Natural killer cell (primary cell): ENCODE measurements at regions of chr17 and their contacts with region 1.

Region 1: GRCh38 chr17:48878918-48879898 is 13.4 kb upstream of the ATP5MC1 start:
- DNase-seq: peak; percentile 28 to 88
- ATAC-seq: peak; percentile 90 to 99 (median 97)
- H3K4me3 ChIP-seq: no peak overlapping the region
- H3K4me3 Mint-ChIP-seq: no peak overlapping the region
- H3K27ac ChIP-seq: no peak overlapping the region
- H3K27ac Mint-ChIP-seq: no peak overlapping the region
- H3K4me1 ChIP-seq: peaks cover 9% of the 10 kb centered on the region
- H3K4me1 Mint-ChIP-seq: no peaks in the 10 kb centered on the region
- H3K27me3 ChIP-seq: no peaks in the 10 kb centered on the region
- H3K27me3 Mint-ChIP-seq: peaks cover 0 to 9% of the 10 kb centered on the region in 2 donors
- CTCF ChIP-seq: peak; percentile 95

Region 2: GRCh38 chr17:48678141-48678971 is 200.9 kb before region 1 on chr17:
- intact Hi-C with region 1: loop called (anchors 1 kb)
- DNase-seq: peak; percentile 75 to 80
- ATAC-seq: peak; percentile 85 to 99 (median 98)
- H3K4me3 ChIP-seq: no peak overlapping the region
- H3K4me3 Mint-ChIP-seq: no peak overlapping the region
- H3K27ac ChIP-seq: no peak overlapping the region
- H3K27ac Mint-ChIP-seq: no peak overlapping the region
- H3K4me1 ChIP-seq: peaks cover 9% of the 10 kb centered on the region
- H3K4me1 Mint-ChIP-seq: peaks cover 0 to 4% of the 10 kb centered on the region in 2 donors
- H3K27me3 ChIP-seq: peaks cover 4% of the 10 kb centered on the region
- H3K27me3 Mint-ChIP-seq: peaks cover 32 to 41% of the 10 kb centered on the region in 2 donors
- CTCF ChIP-seq: peak; percentile 94

Region 3: DNA sequence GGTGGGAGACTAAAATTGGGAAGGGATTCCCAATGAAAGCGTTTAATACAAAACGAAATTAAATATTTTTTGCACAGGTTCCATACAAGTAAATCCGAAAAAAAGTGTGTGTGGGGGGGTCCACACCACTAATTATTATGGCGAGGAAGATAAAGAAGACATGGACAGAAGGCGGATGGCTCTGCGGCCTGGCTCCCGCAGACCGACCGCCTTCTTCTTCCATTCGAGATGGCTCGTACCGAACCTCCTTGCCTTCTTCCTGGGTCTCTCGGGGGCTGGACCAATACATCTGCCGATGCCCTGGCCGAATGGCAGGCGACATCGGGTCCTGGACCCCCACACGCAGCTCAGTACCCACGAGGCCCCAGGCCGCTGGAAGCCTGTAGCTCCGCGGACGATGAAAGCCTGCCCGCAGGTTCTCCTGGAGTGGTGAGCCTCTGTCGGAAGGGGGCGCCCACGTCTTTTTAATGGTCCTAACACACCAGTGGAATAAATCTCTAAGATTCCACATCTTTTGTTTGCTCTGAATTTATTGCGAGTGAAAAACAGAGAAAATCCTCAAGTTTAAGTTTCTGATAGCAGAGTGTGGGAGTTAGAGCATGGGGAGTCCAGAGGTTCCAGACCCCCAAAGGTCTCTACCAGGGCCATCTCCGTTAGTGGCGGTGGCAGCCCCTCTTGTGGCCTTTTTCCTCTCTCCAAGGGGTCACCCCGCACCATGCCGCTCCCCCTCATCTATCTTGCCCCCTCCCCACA is 154.8 kb before region 1 on chr17:
- intact Hi-C with region 1: loop called (anchors 1 kb)
- DNase-seq: peak; percentile 71 to 83
- ATAC-seq: peak; percentile 66 to 79 (median 69)
- H3K4me3 ChIP-seq: no peak overlapping the region
- H3K4me3 Mint-ChIP-seq: peak overlapping the region; percentile 83
- H3K27ac ChIP-seq: no peak overlapping the region
- H3K27ac Mint-ChIP-seq: peak overlapping the region; percentile 35 to 70
- H3K4me1 ChIP-seq: peaks cover 52% of the 10 kb centered on the region
- H3K4me1 Mint-ChIP-seq: peaks cover 27 to 56% of the 10 kb centered on the region in 2 donors
- H3K27me3 ChIP-seq: peaks cover 96% of the 10 kb centered on the region
- H3K27me3 Mint-ChIP-seq: peaks cover 85 to 87% of the 10 kb centered on the region in 2 donors
- CTCF ChIP-seq: peak; percentile 74

Region 4: DNA sequence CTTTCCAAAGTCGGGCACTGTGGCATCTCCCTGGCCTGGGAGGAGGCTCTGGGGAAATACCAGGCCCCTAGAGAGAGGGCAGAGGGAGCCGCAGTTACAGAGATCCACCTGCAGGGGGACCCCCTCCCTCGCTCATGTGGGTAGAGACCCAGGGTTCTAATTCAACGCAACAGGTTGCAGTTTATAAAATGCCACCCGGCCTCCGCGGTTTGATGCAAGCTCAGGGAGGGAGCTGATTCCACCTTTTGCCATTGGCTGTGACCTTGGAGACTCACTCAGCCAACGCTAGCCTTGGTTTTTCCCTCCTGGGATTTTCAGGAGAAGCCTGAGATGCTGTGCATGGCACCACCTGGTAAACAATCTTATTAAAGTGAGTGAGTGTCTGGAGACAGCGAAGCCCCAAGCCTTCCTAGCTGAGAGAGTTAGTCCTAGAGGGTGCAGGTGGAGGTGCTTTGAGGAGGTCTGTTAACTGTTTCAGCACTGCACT is 74.2 kb before region 1 on chr17:
- intact Hi-C with region 1: loop called (anchors 1 kb)
- DNase-seq: peak; percentile 54 to 80
- ATAC-seq: peak; percentile 79 to 97 (median 92)
- H3K4me3 ChIP-seq: no peak overlapping the region
- H3K4me3 Mint-ChIP-seq: no peak overlapping the region
- H3K27ac ChIP-seq: no peak overlapping the region
- H3K27ac Mint-ChIP-seq: no peak overlapping the region
- H3K4me1 ChIP-seq: no peaks in the 10 kb centered on the region
- H3K4me1 Mint-ChIP-seq: peaks cover 0 to 6% of the 10 kb centered on the region in 2 donors
- H3K27me3 ChIP-seq: peaks cover 2% of the 10 kb centered on the region
- H3K27me3 Mint-ChIP-seq: peaks cover 11 to 26% of the 10 kb centered on the region in 2 donors
- CTCF ChIP-seq: peak; percentile 96

Region 5: DNA sequence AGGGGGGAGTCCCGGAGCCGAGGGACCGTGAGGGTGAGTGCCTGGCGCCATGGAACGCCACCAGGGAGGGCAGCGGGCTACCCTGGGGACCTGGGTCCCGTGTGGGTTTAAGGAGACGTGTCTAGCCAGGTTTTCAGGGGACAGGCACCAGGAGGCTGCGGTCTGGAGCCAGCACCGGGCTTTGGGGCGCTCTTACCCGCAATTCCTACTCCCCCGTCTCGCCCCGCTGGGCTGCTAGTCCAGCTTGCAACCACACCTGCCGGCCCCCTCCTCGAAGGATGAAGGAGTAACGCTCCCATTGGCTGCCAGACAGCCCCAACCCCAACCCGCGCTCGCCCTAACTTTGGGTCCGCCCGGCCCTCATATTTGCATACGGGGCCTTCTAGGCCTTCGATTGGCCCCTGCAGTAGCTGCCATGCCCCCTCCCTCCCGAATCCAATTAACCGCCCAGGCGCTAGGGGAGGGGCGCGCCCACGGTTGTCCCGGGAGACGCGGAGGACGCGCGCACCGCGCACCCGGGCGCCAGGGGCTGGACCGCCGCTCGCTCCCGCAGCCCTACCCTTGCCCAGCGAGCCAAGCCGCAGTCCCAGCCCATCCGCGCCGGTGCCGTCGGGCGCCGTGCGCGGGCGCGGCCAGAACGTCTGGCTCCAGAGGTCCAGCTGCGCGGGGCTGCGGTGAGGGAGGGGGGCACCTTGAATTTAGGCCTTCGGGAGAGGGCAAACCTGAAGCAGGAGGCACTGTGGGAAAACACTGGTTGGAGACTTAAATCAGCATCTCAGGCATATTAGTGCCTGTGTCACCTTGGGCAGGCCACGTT is 62.2 kb before region 1 on chr17 and contains the start of gene TTLL6:
- intact Hi-C with region 1: loop called (anchors 1 kb)
- DNase-seq: peak; percentile 66 to 88
- ATAC-seq: peak; percentile 96 to 97 (median 97)
- H3K4me3 ChIP-seq: peak within 1 kb of the TSS; percentile 3
- H3K4me3 Mint-ChIP-seq: peak within 1 kb of the TSS; percentile 61
- H3K27ac ChIP-seq: no peak within 1 kb of the TSS
- H3K27ac Mint-ChIP-seq: peak within 1 kb of the TSS in 1 of 2 donors; percentile 53
- H3K4me1 ChIP-seq: peaks cover 16% of the 10 kb centered on the region
- H3K4me1 Mint-ChIP-seq: peaks cover 10% of the 10 kb centered on the region in 2 donors
- H3K27me3 ChIP-seq: peaks cover 8% of the 10 kb centered on the region
- H3K27me3 Mint-ChIP-seq: peaks cover 20 to 25% of the 10 kb centered on the region in 2 donors
- CTCF ChIP-seq: no peak
- total RNA-seq, gene TTLL6: not detected

Region 6: DNA sequence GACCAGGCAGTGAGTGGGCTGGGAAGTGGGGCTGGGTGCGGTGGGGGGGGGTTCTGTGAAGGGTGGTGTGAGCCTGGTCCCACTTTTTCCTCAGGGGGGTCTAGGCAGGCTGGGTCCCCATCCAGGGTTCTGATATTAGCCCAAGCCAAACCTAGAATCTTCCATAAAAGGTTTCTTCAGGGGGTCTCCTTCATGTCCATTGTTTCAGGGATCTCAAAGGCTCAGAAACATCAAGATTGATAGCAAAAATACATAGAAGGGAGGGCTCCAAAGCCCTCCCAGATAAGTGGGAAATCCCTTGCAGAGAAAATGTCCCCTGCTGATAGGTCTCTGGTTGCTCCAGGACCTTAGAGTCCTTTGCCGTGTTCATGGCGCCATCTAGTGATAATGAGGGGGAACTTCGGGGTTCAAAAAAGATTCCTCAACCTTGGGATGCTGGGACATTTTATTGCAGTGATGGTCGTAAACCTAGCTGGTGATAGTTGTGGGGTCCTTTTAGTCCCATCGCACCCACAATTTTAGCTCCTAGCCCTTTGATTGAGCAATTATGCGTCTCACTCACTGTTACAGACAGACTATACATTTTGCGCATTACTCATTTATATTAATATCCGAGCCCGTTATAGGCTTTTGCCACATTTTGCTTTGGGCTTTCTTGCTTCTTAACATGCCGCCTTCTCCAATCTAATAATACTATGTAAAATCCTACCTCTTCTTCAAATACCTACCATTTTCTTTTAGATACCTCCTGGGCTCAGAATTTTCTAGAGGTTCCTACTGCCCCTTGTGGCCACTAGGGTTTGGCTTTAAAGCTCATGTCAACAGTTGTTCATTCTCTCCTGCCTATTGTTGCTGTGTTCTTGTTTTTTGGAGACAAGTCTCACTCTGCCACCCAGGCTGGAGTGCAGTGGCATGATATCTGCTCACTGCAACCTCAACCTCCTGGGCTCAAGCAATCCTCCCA is 153.0 kb after region 1 on chr17:
- intact Hi-C with region 1: loop called (anchors 2 kb)
- DNase-seq: peak in 1 of 2 donors; percentile 73
- ATAC-seq: peak; percentile 70 to 91 (median 89)
- H3K4me3 ChIP-seq: no peak overlapping the region
- H3K4me3 Mint-ChIP-seq: no peak overlapping the region
- H3K27ac ChIP-seq: no peak overlapping the region
- H3K27ac Mint-ChIP-seq: no peak overlapping the region
- H3K4me1 ChIP-seq: no peaks in the 10 kb centered on the region
- H3K4me1 Mint-ChIP-seq: peaks cover 7 to 8% of the 10 kb centered on the region in 2 donors
- H3K27me3 ChIP-seq: no peaks in the 10 kb centered on the region
- H3K27me3 Mint-ChIP-seq: peaks cover 5 to 14% of the 10 kb centered on the region in 2 donors
- CTCF ChIP-seq: peak; percentile 85